Vagina (tissue), 2 donors: ENCODE measurements at regions of chr4 and their contacts with region 1.

Region 1: DNA sequence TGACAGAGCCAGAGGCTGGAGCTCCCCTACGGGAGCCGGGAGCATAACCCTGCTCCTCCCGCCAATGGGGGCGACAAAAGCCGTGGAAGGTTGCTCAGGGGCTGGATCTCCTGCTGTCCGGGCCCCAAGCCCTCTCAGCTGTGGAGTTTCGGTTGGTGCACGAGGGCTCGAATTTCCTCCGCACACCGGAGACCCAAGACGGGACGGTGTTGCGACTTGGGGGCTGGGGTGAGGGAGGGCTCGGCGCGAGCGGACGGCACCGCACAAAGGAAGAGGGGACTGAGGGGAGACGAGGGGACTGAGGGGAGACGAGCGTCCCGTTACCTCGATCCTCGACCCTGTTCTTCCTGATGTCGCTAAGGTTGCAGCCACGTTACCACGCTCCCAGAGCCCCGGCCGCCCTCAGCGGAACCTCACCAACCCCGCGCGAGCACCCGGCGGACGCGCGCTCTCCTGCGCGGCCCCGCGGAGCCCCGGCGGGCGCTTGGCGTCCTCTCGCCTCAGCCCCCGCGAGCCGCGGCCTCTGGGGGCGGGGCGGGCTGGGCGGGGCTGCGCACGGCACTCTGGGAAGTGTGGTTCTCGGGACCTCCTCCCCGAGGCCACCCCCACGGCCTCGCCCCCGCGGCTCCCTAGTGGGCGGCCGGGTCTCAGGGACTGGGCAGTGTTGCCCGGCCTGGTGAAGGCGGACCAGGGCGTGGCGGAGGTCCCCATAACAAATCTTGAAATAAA is at the start of gene KLHL8:
- DNase-seq: peak in 1 of 2 donors; percentile 91
- H3K4me3 ChIP-seq: peak within 1 kb of the TSS; percentile 71 to 89
- H3K27ac ChIP-seq: peak within 1 kb of the TSS; percentile 93
- H3K4me1 ChIP-seq: peaks cover 16% of the 10 kb centered on the region
- H3K27me3 ChIP-seq: no peaks in the 10 kb centered on the region
- CTCF ChIP-seq: no peak
- POLR2A ChIP-seq: peak in 1 of 2 donors; percentile 77
- total RNA-seq, gene KLHL8: 9.1 TPM

Region 2: GRCh38 chr4:86593688-86594558 is 626.3 kb before region 1 on chr4 and contains the start of gene PTPN13:
- intact Hi-C with region 1: loop called (anchors 10 kb)
- DNase-seq: peak; percentile 97 to 98
- H3K4me3 ChIP-seq: peak within 1 kb of the TSS; percentile 65 to 92
- H3K27ac ChIP-seq: peak within 1 kb of the TSS; percentile 98
- H3K4me1 ChIP-seq: peaks cover 38% of the 10 kb centered on the region
- H3K27me3 ChIP-seq: no peaks in the 10 kb centered on the region
- CTCF ChIP-seq: no peak
- POLR2A ChIP-seq: peak in 1 of 2 donors; percentile 88
- total RNA-seq, gene PTPN13: 66.3 TPM

Region 3: GRCh38 chr4:86927843-86928395 is 292.3 kb before region 1 on chr4:
- intact Hi-C with region 1: loop called (anchors 5 kb)
- DNase-seq: peak in 1 of 2 donors; percentile 94
- H3K4me3 ChIP-seq: no peak overlapping the region
- H3K27ac ChIP-seq: peak overlapping the region; percentile 74
- H3K4me1 ChIP-seq: peaks cover 11% of the 10 kb centered on the region
- H3K27me3 ChIP-seq: no peaks in the 10 kb centered on the region
- CTCF ChIP-seq: no peak
- POLR2A ChIP-seq: no peak

Region 4: DNA sequence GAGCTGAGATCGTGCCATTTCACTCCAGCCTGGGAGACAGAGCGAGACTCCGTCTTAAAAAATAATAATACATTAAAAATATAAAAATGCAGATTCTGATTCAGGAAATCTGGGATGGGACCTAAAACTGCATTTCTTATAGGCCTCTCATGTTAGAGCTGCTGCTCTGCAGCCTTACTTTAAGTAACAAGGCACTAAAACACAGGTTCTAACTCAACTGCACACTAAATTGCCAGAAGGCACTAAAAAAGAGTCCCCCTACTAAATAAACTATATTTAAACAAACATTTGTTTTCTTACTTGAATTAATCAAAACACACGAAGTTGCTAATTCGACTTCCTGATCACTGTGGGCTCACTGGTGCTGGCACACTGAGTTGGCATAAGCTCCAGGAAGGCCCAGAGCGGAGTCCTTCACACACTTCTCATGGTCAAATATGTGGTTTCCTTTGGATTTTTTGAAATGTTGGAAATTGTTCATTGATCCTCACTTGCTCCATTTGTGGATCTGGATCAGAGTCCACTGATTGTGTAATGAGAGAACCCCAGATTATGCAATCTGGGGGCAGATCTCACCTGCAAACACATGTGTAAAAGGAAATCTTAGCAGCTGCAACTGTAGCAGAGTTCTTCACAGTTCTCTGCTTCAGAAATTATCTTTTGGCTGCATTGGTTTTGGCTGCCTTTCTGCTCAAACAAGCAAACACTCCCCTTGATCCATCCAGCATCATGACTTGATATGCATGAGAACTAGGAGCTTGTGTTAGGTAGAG is 226.2 kb before region 1 on chr4:
- intact Hi-C with region 1: no loop called
- DNase-seq: no peak
- H3K4me3 ChIP-seq: no peak overlapping the region
- H3K27ac ChIP-seq: no peak overlapping the region
- H3K4me1 ChIP-seq: peaks cover 6% of the 10 kb centered on the region
- H3K27me3 ChIP-seq: no peaks in the 10 kb centered on the region
- CTCF ChIP-seq: no peak
- POLR2A ChIP-seq: no peak